Activated B cell treated with CpG ODN at 0.5 μM for 24 hours (primary cell): ENCODE measurements at regions of chr10 and their contacts with region 1.

Region 1: DNA sequence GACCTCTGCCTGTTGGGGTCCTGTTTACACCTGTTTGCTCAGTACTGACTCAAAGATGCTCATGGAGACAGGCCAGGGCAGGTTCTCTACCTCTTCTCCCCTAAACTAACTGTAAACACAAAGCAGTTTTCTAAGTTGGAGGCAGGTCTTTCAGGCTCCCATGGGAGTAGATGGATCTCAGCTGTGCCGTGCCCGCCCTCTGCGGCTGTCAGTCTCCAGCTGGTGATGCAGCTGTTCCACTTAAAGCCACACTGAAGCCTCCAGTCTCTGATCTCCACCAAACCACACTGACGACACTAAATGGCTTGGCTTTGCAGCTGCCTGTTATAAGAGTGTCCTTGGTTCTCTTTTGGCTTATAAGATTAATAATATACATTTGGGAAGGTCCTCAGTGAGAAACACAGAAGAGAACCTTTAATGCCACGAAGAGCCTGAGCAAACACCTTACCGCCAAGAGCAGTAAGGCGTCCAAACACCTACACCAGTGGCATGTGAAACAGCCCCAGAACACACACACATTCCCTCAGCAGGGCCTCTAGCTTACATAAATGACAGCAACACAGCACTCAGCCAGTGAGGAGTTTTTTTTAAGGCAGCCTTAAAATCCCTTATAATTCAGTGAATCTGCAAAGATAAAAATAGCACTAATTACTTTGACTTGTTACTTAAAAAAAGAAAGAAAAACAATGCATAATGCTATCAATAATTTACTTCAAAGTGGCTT is 60.4 kb upstream of the KCNIP2 start:
- DNase-seq: peak; percentile 53
- ATAC-seq: peak; percentile 79
- H3K4me3 Mint-ChIP-seq: peak overlapping the region; percentile 57
- H3K27ac Mint-ChIP-seq: peak overlapping the region; percentile 95
- H3K4me1 Mint-ChIP-seq: peaks cover 85% of the 10 kb centered on the region
- H3K27me3 Mint-ChIP-seq: no peaks in the 10 kb centered on the region
- CTCF ChIP-seq: no peak

Region 2: GRCh38 chr10:101889256-101890210 is 14.5 kb before region 1 on chr10:
- CTCF ChIA-PET with region 1: interaction called, 28 read pairs
- POLR2A ChIA-PET with region 1: interaction called, 4 read pairs
- intact Hi-C with region 1: loop called (anchors 1 kb)
- DNase-seq: peak; percentile 62
- ATAC-seq: peak; percentile 96
- H3K4me3 Mint-ChIP-seq: no peak overlapping the region
- H3K27ac Mint-ChIP-seq: peak overlapping the region; percentile 79
- H3K4me1 Mint-ChIP-seq: peaks cover 41% of the 10 kb centered on the region
- H3K27me3 Mint-ChIP-seq: no peaks in the 10 kb centered on the region
- CTCF ChIP-seq: peak; percentile 62

Region 3: DNA sequence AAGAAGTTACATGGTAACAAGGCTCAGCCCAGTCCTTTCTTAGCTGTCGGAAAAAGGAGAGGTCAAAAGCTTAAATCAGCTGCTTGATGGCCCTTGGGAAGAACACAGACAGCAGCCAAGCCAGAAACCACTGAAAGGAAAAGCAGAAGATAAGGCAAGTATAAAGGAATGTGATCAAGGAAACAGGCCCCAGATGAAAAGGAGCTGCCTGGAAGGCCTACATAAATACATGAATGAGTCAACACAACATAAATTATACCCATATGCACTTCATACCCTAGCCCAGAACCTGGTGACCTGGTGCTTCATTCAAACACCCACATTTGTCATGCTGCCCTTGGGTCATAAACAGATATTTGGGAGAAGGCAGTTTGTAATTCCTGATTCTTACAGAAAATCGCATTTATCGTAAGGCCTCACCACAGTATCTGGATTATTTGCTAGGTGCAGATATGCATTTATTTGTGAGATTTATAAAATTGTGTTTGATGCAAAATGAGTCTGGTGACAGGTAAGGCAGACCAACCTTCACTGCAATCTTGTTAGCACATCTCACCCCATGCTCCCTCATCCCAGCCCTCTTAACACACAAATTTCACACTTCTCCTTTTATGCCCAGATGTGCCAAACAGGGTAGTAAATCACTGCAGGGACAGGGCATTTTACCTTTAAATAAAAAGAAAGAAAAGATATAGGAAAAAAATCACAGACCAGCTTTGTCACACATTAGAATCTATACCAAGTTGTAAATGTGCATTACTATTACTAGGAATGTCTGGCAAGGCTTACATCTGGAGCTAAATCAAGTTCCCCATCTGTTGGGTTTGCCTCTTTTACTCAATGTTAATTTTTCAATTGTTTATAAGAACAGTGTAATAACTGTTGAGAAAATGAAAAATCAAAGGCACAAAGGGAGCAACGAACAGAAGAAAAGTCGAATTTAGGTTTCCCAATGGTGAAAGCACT is 34.6 kb after region 1 on chr10:
- CTCF ChIA-PET with region 1: no interaction called
- POLR2A ChIA-PET with region 1: interaction called, 3 read pairs
- intact Hi-C with region 1: loop called (anchors 5 kb)
- DNase-seq: no peak
- ATAC-seq: no peak
- H3K4me3 Mint-ChIP-seq: no peak overlapping the region
- H3K27ac Mint-ChIP-seq: no peak overlapping the region
- H3K4me1 Mint-ChIP-seq: peaks cover 39% of the 10 kb centered on the region
- H3K27me3 Mint-ChIP-seq: no peaks in the 10 kb centered on the region
- CTCF ChIP-seq: no peak

Region 4: DNA sequence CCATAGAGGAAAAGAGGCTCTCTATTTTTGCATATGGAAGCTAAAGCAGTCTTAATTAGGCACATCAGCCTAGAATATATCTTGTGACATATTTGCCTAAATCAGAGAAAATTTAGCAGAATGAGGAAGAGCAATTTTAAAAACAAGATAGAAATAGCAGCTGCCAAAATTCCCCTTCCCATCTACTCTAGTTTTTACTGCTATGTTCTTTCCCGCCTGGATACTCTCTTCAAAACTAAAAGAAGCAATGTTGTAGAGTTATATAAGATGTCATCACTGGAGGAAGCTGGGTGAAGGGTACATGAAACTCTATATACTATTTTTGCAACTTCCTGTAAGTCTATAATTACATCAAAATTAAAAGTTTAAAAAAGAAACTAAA is 64.9 kb after region 1 on chr10:
- CTCF ChIA-PET with region 1: interaction called, 11 read pairs
- POLR2A ChIA-PET with region 1: interaction called, 14 read pairs
- intact Hi-C with region 1: loop called (anchors 2 kb)
- DNase-seq: no peak
- ATAC-seq: peak; percentile 63
- H3K4me3 Mint-ChIP-seq: peak overlapping the region; percentile 70
- H3K27ac Mint-ChIP-seq: peak overlapping the region; percentile 95
- H3K4me1 Mint-ChIP-seq: peaks cover 97% of the 10 kb centered on the region
- H3K27me3 Mint-ChIP-seq: no peaks in the 10 kb centered on the region
- CTCF ChIP-seq: no peak

Region 5: GRCh38 chr10:101974091-101974971 is 70.3 kb after region 1 on chr10:
- CTCF ChIA-PET with region 1: interaction called, 11 read pairs
- POLR2A ChIA-PET with region 1: interaction called, 14 read pairs
- intact Hi-C with region 1: loop called (anchors 2 kb)
- DNase-seq: no peak
- ATAC-seq: no peak
- H3K4me3 Mint-ChIP-seq: peak overlapping the region; percentile 74
- H3K27ac Mint-ChIP-seq: peak overlapping the region; percentile 88
- H3K4me1 Mint-ChIP-seq: peaks cover 67% of the 10 kb centered on the region
- H3K27me3 Mint-ChIP-seq: no peaks in the 10 kb centered on the region
- CTCF ChIP-seq: no peak

Region 6: DNA sequence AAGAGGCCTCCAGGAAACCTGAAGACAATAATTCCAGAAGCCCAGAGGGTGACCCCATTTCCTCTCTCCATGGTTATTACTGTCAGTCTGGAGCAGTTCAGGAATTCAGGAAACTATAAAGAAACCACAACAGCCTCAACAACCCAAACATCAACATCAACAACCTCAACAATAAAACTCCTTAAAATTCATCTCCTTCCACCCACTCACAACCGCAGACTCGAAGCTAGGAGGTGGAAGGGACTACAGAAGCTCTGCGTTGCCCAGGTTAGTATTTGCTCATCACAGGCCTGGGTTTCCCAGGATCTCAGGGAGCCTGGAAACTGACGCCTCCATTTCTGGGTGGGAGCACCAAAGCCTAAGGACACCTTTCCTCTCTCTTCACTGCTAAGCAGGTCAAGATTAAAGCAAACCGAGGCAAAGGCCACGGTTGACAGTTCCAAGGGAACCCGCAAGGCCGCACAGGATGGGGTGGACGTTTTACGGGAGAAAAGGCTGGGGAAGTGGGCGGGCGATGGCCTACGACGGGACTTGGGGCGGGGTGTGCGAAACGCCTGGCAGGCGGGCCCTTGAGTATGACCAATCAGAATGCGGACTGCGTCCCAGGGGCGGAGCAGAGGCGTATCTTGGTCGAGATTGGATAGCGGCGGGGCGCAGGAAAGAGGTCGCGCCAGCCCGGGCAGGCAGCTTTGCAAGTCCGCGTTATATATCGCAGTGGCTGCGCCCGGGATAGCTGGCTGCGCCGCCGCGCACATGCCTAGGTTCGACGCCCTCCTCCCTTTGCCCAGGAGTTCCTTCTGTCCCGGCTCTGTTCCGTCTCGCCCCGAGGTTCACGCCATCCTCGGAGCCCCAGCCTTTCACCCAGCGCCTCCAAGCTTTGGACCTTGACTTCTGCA is 321.9 kb after region 1 on chr10 and contains the start of gene ELOVL3:
- CTCF ChIA-PET with region 1: no interaction called
- POLR2A ChIA-PET with region 1: no interaction called
- intact Hi-C with region 1: no loop called
- DNase-seq: peak; percentile 69
- ATAC-seq: peak; percentile 94
- H3K4me3 Mint-ChIP-seq: peak within 1 kb of the TSS; percentile 71
- H3K27ac Mint-ChIP-seq: no peak within 1 kb of the TSS
- H3K4me1 Mint-ChIP-seq: peaks cover 19% of the 10 kb centered on the region
- H3K27me3 Mint-ChIP-seq: peaks cover 59% of the 10 kb centered on the region
- CTCF ChIP-seq: no peak
- total RNA-seq, gene ELOVL3: not detected in 2 replicates